ENCODE measurements at regions of chr17 and their contacts with region 1.

Region 1: GRCh38 chr17:50361561-50362480 is 11.2 kb downstream of the MRPL27 start:
- DNase-seq: peak; percentile 76
- ATAC-seq: peak; percentile 93
- H3K4me3 ChIP-seq: no peak overlapping the region
- H3K4me3 Mint-ChIP-seq: no peak overlapping the region
- H3K27ac ChIP-seq: no peak overlapping the region
- H3K27ac Mint-ChIP-seq: peak overlapping the region; percentile 51
- H3K4me1 ChIP-seq: peaks cover 5 to 8% of the 10 kb centered on the region in 2 donors
- H3K4me1 Mint-ChIP-seq: peaks cover 8% of the 10 kb centered on the region
- H3K27me3 ChIP-seq: no peaks in the 10 kb centered on the region
- H3K27me3 Mint-ChIP-seq: no peaks in the 10 kb centered on the region
- CTCF ChIP-seq: peak; percentile 81

Region 2: DNA sequence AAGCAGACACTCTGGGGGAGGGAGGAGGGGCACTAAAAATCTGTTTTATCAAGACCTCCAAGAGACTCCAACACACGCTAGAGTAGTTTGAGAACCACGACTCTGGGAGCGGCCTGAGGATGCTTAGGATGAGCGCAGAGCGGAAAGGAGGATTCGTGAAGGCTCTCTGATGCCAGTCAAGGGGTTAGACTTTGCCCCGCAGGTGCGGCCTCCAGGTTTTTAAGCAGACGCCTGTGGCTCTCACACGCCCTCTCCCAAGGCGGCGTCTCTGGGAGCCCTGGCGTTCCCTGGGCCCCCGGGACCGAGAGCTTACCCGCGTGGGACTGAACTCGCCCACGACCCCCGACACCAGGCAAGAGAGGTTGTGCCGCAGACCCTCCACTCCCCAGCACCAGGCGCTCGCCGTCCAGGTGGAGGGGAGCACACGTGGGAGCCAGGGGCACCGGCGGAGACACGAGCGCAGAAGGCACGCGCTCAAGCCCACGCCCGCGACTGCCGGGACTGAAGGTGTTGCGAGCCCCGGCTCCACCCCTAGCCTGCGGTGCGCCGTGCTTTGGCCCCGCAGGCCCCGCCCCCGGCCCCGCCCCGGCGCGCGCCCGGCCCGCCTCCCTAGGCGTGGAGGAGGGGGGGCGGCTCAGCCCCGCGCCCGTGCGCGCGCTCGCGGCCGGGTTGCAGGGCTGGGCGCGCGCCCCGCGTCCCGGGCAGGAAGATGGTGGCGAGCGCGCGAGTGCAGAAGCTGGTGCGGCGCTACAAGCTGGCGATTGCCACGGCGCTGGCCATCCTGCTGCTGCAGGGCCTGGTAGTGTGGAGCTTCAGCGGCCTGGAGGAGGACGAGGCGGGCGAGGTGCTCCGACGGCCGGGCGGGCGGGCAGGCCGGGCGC is 16.1 kb before region 1 on chr17 and contains the start of gene XYLT2:
- CTCF ChIA-PET with region 1: interaction called, 29 read pairs
- POLR2A ChIA-PET with region 1: interaction called, 3 read pairs
- intact Hi-C with region 1: loop called (anchors 2 kb)
- DNase-seq: peak; percentile 95
- ATAC-seq: peak; percentile 95
- H3K4me3 ChIP-seq: peak within 1 kb of the TSS; percentile 9 to 80 (median 75)
- H3K4me3 Mint-ChIP-seq: peak within 1 kb of the TSS; percentile 92
- H3K27ac ChIP-seq: peak within 1 kb of the TSS; percentile 18 to 54
- H3K27ac Mint-ChIP-seq: peak within 1 kb of the TSS; percentile 91
- H3K4me1 ChIP-seq: peaks cover 10 to 21% of the 10 kb centered on the region in 2 donors
- H3K4me1 Mint-ChIP-seq: peaks cover 32% of the 10 kb centered on the region
- H3K27me3 ChIP-seq: no peaks in the 10 kb centered on the region
- H3K27me3 Mint-ChIP-seq: peaks cover 4% of the 10 kb centered on the region
- CTCF ChIP-seq: no peak
- total RNA-seq, gene XYLT2: 29.9 and 30.3 TPM in 2 replicates

Region 3: DNA sequence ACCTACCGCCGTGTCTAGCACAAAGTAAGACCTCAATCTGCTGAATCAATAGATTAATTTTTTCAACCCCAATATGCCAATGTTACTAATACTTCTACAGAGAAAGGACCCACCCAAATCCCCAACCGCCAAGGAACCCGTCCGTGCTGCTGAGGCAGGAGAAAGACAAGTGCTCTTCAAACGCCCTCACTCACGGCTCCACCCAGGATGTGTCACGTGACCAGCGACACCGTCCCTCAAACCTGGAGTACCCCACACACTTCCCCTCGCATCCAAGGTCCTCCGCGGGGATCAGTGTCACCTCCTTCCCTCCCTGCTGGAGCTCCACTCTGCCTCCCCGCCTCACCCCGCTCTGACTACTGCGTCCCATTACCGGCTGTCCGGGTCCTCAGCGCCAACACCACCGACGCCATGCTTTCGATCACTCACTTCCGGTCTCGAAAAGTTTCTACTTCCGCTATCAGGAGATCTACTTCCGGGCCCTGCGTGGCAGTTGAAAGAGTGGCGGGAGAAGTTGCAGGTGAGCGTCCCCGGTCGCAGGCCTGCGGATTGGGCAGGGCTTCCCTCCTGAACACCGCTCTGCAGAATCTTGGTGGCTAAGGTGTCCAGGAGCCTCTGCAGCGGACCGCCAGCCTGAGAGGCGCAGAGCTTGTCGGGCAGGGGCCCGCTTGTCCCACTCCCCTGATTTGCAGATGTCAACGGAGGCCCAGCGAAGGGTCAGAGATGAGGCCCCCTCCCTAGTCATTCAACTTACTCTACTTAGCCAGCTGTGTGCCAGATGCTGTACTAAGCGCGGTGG is 11.1 kb after region 1 on chr17 and contains the starts of genes EME1 and MRPL27:
- CTCF ChIA-PET with region 1: interaction called, 27 read pairs
- POLR2A ChIA-PET with region 1: interaction called, 3 read pairs
- intact Hi-C with region 1: loop called (anchors 1 kb)
- DNase-seq: peak; percentile 96
- ATAC-seq: peak; percentile 88
- H3K4me3 ChIP-seq: peak within 1 kb of the TSS; percentile 65 to 85 (median 81)
- H3K4me3 Mint-ChIP-seq: peak within 1 kb of the TSS; percentile 100
- H3K27ac ChIP-seq: peak within 1 kb of the TSS; percentile 91 to 96
- H3K27ac Mint-ChIP-seq: peak within 1 kb of the TSS; percentile 100
- H3K4me1 ChIP-seq: peaks cover 14 to 19% of the 10 kb centered on the region in 2 donors
- H3K4me1 Mint-ChIP-seq: peaks cover 23% of the 10 kb centered on the region
- H3K27me3 ChIP-seq: no peaks in the 10 kb centered on the region
- H3K27me3 Mint-ChIP-seq: no peaks in the 10 kb centered on the region
- CTCF ChIP-seq: no peak
- total RNA-seq, gene EME1: 2.3 and 3.4 TPM in 2 replicates
- total RNA-seq, gene MRPL27: 33.5 and 40.2 TPM in 2 replicates

Region 4: GRCh38 chr17:50380369-50381259 is 18.8 kb after region 1 on chr17:
- CTCF ChIA-PET with region 1: interaction called, 15 read pairs
- POLR2A ChIA-PET with region 1: no interaction called
- intact Hi-C with region 1: no loop called
- DNase-seq: no peak
- ATAC-seq: no peak
- H3K4me3 ChIP-seq: no peak overlapping the region
- H3K4me3 Mint-ChIP-seq: no peak overlapping the region
- H3K27ac ChIP-seq: no peak overlapping the region
- H3K27ac Mint-ChIP-seq: no peak overlapping the region
- H3K4me1 ChIP-seq: no peaks in the 10 kb centered on the region
- H3K4me1 Mint-ChIP-seq: no peaks in the 10 kb centered on the region
- H3K27me3 ChIP-seq: no peaks in the 10 kb centered on the region
- H3K27me3 Mint-ChIP-seq: no peaks in the 10 kb centered on the region
- CTCF ChIP-seq: no peak

Region 5: GRCh38 chr17:50389534-50389933 is 27.7 kb after region 1 on chr17:
- CTCF ChIA-PET with region 1: interaction called, 12 read pairs
- POLR2A ChIA-PET with region 1: no interaction called
- intact Hi-C with region 1: no loop called
- DNase-seq: no peak
- ATAC-seq: no peak
- H3K4me3 ChIP-seq: no peak overlapping the region
- H3K4me3 Mint-ChIP-seq: no peak overlapping the region
- H3K27ac ChIP-seq: no peak overlapping the region
- H3K27ac Mint-ChIP-seq: no peak overlapping the region
- H3K4me1 ChIP-seq: peaks cover 6 to 8% of the 10 kb centered on the region in 2 donors
- H3K4me1 Mint-ChIP-seq: peaks cover 18% of the 10 kb centered on the region
- H3K27me3 ChIP-seq: no peaks in the 10 kb centered on the region
- H3K27me3 Mint-ChIP-seq: no peaks in the 10 kb centered on the region
- CTCF ChIP-seq: no peak

Region 6: GRCh38 chr17:50501054-50501453 is 139.2 kb after region 1 on chr17:
- CTCF ChIA-PET with region 1: interaction called, 18 read pairs
- POLR2A ChIA-PET with region 1: no interaction called
- intact Hi-C with region 1: loop called (anchors 1 kb)
- DNase-seq: peak; percentile 34
- ATAC-seq: no peak
- H3K4me3 ChIP-seq: no peak overlapping the region
- H3K4me3 Mint-ChIP-seq: no peak overlapping the region
- H3K27ac ChIP-seq: no peak overlapping the region
- H3K27ac Mint-ChIP-seq: no peak overlapping the region
- H3K4me1 ChIP-seq: no peaks in the 10 kb centered on the region
- H3K4me1 Mint-ChIP-seq: no peaks in the 10 kb centered on the region
- H3K27me3 ChIP-seq: peaks cover 0 to 2% (median 0%) of the 10 kb centered on the region in 4 experiments
- H3K27me3 Mint-ChIP-seq: peaks cover 3% of the 10 kb centered on the region
- CTCF ChIP-seq: peak; percentile 62